B cell (primary cell): ENCODE measurements at regions of chr1 and their contacts with region 1.

Region 1: GRCh38 chr1:221166559-221167318 is 287.5 kb downstream of the HLX start:
- DNase-seq: peak; percentile 73
- ATAC-seq: peak; percentile 82
- H3K4me3 ChIP-seq: peak overlapping the region in 2 of 5 experiments; percentile 25 to 54
- H3K4me3 Mint-ChIP-seq: peak overlapping the region; percentile 35
- H3K27ac ChIP-seq: no peak overlapping the region
- H3K27ac Mint-ChIP-seq: peak overlapping the region; percentile 7
- H3K4me1 ChIP-seq: peaks cover 37 to 54% of the 10 kb centered on the region in 2 donors
- H3K4me1 Mint-ChIP-seq: peaks cover 53% of the 10 kb centered on the region
- H3K27me3 ChIP-seq: peaks cover 0 to 32% (median 17%) of the 10 kb centered on the region in 4 experiments
- H3K27me3 Mint-ChIP-seq: peaks cover 12% of the 10 kb centered on the region
- CTCF ChIP-seq: no peak

Region 2: DNA sequence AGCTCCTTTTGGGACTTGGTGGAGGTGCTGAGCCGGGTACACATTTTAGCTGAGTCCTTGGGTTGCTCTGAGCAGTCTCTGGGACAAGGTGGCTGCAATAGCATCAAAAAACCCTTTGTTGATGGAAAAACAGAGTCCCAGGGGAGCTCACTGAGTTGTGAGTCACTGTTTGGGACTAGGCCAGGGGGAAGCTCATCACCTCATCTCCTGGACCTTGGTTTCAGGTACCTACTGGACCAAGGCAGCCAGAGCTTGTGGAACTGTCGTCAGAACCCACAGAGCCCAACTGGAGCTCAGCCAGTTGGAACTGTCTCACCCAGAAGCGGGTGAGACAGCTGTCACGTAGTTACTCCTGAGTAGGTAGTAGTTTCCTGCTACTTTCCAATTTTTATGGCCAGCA is 140.8 kb before region 1 on chr1:
- CTCF ChIA-PET with region 1: no interaction called
- POLR2A ChIA-PET with region 1: no interaction called
- intact Hi-C with region 1: loop called (anchors 5 kb)
- DNase-seq: peak; percentile 61
- ATAC-seq: peak; percentile 95
- H3K4me3 ChIP-seq: no peak overlapping the region
- H3K4me3 Mint-ChIP-seq: peak overlapping the region; percentile 1
- H3K27ac ChIP-seq: no peak overlapping the region
- H3K27ac Mint-ChIP-seq: peak overlapping the region; percentile 56
- H3K4me1 ChIP-seq: peaks cover 12 to 13% of the 10 kb centered on the region in 2 donors
- H3K4me1 Mint-ChIP-seq: peaks cover 25% of the 10 kb centered on the region
- H3K27me3 ChIP-seq: no peaks in the 10 kb centered on the region
- H3K27me3 Mint-ChIP-seq: no peaks in the 10 kb centered on the region
- CTCF ChIP-seq: no peak

Region 3: DNA sequence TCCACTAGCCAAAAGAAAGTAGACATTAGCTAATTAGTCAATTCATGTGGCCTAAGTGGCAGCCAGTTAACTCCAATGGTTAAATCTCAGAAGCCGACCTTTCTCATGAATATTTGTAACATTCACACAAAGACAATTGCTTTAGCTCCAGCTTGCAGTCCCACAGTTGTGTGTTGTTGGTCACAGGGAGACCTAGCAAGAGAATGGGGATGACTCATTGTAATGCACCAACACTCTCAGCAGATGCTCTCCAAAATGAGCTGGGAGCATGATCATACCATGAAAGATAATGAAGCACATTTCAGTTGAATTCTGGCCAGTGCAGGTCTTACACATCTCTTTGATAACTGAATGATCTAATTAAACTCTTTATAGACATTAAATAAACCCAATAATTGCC is 127.1 kb before region 1 on chr1:
- CTCF ChIA-PET with region 1: no interaction called
- POLR2A ChIA-PET with region 1: no interaction called
- intact Hi-C with region 1: no loop called
- DNase-seq: no peak
- ATAC-seq: no peak
- H3K4me3 ChIP-seq: no peak overlapping the region
- H3K4me3 Mint-ChIP-seq: no peak overlapping the region
- H3K27ac ChIP-seq: no peak overlapping the region
- H3K27ac Mint-ChIP-seq: no peak overlapping the region
- H3K4me1 ChIP-seq: no peaks in the 10 kb centered on the region
- H3K4me1 Mint-ChIP-seq: peaks cover 17% of the 10 kb centered on the region
- H3K27me3 ChIP-seq: no peaks in the 10 kb centered on the region
- H3K27me3 Mint-ChIP-seq: no peaks in the 10 kb centered on the region
- CTCF ChIP-seq: no peak

Region 4: DNA sequence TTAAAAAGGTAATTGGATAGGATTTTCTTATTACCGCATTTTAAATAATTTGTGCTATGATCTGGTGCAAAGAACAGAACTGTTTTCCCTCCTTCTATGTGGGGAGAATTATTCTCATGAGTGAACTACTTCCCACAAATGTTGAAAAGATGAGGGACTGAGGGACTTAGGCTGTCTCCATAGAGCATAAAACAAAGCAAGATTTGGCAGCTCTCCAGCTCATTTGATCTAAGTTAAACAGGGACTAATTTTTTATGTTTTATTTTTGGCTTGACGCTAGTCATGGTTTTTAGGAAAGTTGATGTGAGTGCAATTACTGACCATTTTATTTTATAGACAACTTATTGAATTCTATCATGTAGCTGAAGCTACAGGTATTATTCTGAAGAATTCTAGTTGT is 74.9 kb after region 1 on chr1:
- CTCF ChIA-PET with region 1: no interaction called
- POLR2A ChIA-PET with region 1: no interaction called
- intact Hi-C with region 1: no loop called
- DNase-seq: no peak
- ATAC-seq: no peak
- H3K4me3 ChIP-seq: no peak overlapping the region
- H3K4me3 Mint-ChIP-seq: no peak overlapping the region
- H3K27ac ChIP-seq: no peak overlapping the region
- H3K27ac Mint-ChIP-seq: no peak overlapping the region
- H3K4me1 ChIP-seq: no peaks in the 10 kb centered on the region
- H3K4me1 Mint-ChIP-seq: no peaks in the 10 kb centered on the region
- H3K27me3 ChIP-seq: peaks cover 0 to 3% (median 0%) of the 10 kb centered on the region in 4 experiments
- H3K27me3 Mint-ChIP-seq: peaks cover 8% of the 10 kb centered on the region
- CTCF ChIP-seq: no peak

Region 5: DNA sequence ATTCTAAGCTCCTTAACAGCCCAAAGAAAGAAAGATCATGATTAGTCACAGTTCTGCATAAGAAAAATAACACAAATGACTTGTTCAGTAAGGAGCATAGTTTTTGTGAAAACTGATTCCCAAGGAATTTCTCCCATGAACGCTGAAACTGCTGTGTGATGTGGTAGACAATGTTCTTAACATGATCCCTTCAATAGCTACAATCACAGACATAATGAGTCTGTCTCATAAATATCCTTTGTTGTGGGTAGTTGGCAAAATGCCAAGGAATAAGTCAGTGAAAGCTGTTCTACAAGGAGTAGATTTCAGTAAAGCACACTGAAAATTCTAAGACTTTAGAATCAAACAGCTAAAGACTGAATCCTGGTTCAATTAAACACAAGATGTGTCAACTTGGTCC is 117.3 kb after region 1 on chr1:
- CTCF ChIA-PET with region 1: no interaction called
- POLR2A ChIA-PET with region 1: no interaction called
- intact Hi-C with region 1: no loop called
- DNase-seq: no peak
- ATAC-seq: no peak
- H3K4me3 ChIP-seq: no peak overlapping the region
- H3K4me3 Mint-ChIP-seq: no peak overlapping the region
- H3K27ac ChIP-seq: no peak overlapping the region
- H3K27ac Mint-ChIP-seq: no peak overlapping the region
- H3K4me1 ChIP-seq: no peaks in the 10 kb centered on the region
- H3K4me1 Mint-ChIP-seq: no peaks in the 10 kb centered on the region
- H3K27me3 ChIP-seq: peaks cover 0 to 3% (median 0%) of the 10 kb centered on the region in 4 experiments
- H3K27me3 Mint-ChIP-seq: peaks cover 14% of the 10 kb centered on the region
- CTCF ChIP-seq: no peak

Region 6: GRCh38 chr1:221302810-221303209 is 136.1 kb after region 1 on chr1:
- CTCF ChIA-PET with region 1: no interaction called
- POLR2A ChIA-PET with region 1: no interaction called
- intact Hi-C with region 1: no loop called
- DNase-seq: no peak
- ATAC-seq: no peak
- H3K4me3 ChIP-seq: no peak overlapping the region
- H3K4me3 Mint-ChIP-seq: no peak overlapping the region
- H3K27ac ChIP-seq: no peak overlapping the region
- H3K27ac Mint-ChIP-seq: no peak overlapping the region
- H3K4me1 ChIP-seq: no peaks in the 10 kb centered on the region
- H3K4me1 Mint-ChIP-seq: no peaks in the 10 kb centered on the region
- H3K27me3 ChIP-seq: peaks cover 0 to 6% (median 0%) of the 10 kb centered on the region in 4 experiments
- H3K27me3 Mint-ChIP-seq: peaks cover 46% of the 10 kb centered on the region
- CTCF ChIP-seq: no peak